ENCODE measurements at regions of chr3 and their contacts with region 1.

Region 1: DNA sequence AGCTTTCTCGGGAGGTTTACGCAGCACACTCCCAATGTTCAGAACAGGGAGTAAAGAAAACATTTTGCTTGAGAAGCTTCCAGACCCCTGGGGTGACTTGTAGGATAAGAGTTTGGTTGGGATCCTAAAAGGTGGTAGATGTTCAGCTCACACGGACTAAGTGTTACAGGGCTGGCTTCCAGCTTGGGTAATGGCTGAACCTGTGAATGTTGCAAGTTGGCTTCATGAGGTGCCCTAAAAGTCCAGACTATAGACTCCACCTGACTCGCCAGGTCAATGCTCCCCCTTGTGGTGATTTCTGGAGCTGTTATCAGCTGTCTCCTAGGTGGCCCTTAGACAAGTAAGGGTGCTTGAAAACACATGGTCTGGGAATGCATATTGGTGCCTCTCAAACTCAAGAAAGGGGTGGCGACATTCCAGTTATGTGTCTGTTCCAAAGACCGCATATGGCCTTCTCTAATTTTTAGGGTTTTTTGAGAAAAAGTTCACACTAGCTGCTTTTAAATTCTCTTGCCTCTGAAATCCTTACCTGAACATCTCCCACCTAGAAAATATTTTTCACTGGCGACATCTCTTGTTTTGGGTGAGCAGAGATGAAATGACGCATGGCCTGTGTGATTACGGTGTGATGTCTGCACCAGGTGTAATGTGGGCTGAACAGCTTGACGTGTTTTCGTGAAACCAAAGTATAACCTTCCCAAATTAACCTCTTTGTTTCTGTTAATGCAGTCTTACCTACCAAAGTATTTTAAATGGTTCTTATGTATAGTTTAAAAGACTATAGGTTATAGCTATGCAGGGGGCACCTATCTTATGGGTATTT is 175.7 kb upstream of the KBTBD8 start:
- DNase-seq: no peak
- H3K4me3 ChIP-seq: no peak overlapping the region
- H3K27ac ChIP-seq: no peak overlapping the region
- H3K4me1 ChIP-seq: peaks cover 0 to 8% (median 2%) of the 10 kb centered on the region in 4 donors
- H3K27me3 ChIP-seq: no peaks in the 10 kb centered on the region
- CTCF ChIP-seq: peak; percentile 64 to 84 (median 70)
- EP300 ChIP-seq: no peak
- POLR2A ChIP-seq: no peak

Region 2: GRCh38 chr3:66256806-66257205 is 565.6 kb before region 1 on chr3:
- intact Hi-C with region 1: loop called (anchors 5 kb)
- DNase-seq: no peak
- H3K4me3 ChIP-seq: no peak overlapping the region
- H3K27ac ChIP-seq: no peak overlapping the region
- H3K4me1 ChIP-seq: peaks cover 0 to 6% (median 0%) of the 10 kb centered on the region in 4 donors
- H3K27me3 ChIP-seq: no peaks in the 10 kb centered on the region
- CTCF ChIP-seq: no peak
- EP300 ChIP-seq: no peak
- POLR2A ChIP-seq: no peak

Region 3: DNA sequence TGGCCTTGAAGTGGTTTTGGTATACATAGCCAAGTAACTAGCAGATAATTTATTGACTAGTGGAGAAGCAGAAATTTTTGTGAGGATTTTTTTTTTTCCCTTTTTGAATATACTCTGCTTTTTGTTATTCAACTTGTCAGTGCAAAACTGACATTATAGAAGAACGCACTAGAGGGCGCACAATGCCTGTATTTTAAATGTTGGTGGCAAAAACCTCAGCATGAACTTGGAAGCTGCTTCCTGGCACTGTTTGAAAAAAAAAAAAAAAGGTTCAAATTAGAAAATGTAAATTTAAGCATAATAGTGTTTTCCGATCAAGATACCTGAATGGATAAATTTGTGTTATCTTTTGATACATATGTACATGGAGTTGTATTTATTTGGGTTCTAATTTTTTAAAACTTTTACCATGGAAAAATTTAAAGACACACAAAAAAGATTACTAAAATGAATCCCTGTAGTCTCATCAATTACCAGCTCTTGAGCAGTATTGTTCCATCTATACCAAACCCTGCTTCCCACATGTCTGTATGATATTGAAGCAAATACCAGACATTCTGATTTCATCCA is 545.6 kb before region 1 on chr3:
- intact Hi-C with region 1: loop called (anchors 2 kb)
- DNase-seq: no peak
- H3K4me3 ChIP-seq: no peak overlapping the region
- H3K27ac ChIP-seq: no peak overlapping the region
- H3K4me1 ChIP-seq: no peaks in the 10 kb centered on the region
- H3K27me3 ChIP-seq: no peaks in the 10 kb centered on the region
- CTCF ChIP-seq: peak; percentile 66 to 73 (median 71)
- EP300 ChIP-seq: no peak
- POLR2A ChIP-seq: no peak

Region 4: GRCh38 chr3:66863205-66864111 is 41.1 kb after region 1 on chr3:
- intact Hi-C with region 1: no loop called
- DNase-seq: no peak
- H3K4me3 ChIP-seq: no peak overlapping the region
- H3K27ac ChIP-seq: no peak overlapping the region
- H3K4me1 ChIP-seq: no peaks in the 10 kb centered on the region
- H3K27me3 ChIP-seq: no peaks in the 10 kb centered on the region
- CTCF ChIP-seq: no peak
- EP300 ChIP-seq: no peak
- POLR2A ChIP-seq: no peak